OCI-LY7 (cell line): ENCODE measurements at regions of chr3 and their contacts with region 1.

Region 1: DNA sequence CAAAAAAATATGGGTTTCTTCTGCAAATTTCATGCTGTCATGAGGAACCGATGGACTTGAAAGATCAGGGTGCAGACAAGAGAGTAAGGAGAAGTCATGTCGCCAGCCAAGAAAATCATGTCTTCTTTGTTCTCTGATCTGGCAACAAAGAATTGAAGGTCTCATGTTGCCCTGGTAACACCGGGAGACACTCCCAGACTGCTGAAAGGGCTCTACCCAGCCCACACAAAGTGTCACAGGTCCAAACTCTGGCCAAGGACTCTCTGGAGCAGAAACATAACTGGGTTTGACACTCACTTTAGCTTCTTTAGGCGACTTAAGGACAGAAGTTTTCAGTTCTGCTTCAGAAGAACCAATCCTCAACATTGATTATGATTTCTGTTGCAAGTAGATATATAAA is 42.9 kb downstream of the SIDT1 start:
- DNase-seq: no peak
- H3K4me3 ChIP-seq: no peak overlapping the region
- H3K27ac ChIP-seq: no peak overlapping the region
- H3K4me1 ChIP-seq: no peaks in the 10 kb centered on the region
- CTCF ChIP-seq: no peak

Region 2: DNA sequence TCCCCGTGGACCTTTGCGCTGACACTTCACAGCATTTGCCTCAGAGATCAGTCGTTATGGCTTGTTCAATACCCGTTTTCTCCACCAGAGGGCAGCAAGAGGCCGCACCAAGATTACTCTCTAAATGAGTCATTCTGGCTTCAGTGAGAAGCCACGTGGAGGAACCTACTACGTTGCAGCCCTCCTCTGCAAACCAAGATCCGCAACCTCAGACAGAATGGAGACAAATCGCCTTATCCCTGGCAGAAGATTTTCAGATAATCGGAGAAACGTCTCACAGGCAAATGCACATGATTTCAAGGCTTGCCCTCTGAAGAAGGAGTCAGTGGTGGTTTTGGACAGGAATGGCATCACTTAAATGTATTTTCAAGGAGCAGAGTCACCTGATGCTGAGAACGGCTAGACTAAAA is 523.9 kb before region 1 on chr3:
- CTCF ChIA-PET with region 1: no interaction called
- POLR2A ChIA-PET with region 1: no interaction called
- intact Hi-C with region 1: loop called (anchors 2 kb)
- DNase-seq: peak; percentile 63
- H3K4me3 ChIP-seq: no peak overlapping the region
- H3K27ac ChIP-seq: no peak overlapping the region
- H3K4me1 ChIP-seq: no peaks in the 10 kb centered on the region
- CTCF ChIP-seq: peak; percentile 94

Region 3: DNA sequence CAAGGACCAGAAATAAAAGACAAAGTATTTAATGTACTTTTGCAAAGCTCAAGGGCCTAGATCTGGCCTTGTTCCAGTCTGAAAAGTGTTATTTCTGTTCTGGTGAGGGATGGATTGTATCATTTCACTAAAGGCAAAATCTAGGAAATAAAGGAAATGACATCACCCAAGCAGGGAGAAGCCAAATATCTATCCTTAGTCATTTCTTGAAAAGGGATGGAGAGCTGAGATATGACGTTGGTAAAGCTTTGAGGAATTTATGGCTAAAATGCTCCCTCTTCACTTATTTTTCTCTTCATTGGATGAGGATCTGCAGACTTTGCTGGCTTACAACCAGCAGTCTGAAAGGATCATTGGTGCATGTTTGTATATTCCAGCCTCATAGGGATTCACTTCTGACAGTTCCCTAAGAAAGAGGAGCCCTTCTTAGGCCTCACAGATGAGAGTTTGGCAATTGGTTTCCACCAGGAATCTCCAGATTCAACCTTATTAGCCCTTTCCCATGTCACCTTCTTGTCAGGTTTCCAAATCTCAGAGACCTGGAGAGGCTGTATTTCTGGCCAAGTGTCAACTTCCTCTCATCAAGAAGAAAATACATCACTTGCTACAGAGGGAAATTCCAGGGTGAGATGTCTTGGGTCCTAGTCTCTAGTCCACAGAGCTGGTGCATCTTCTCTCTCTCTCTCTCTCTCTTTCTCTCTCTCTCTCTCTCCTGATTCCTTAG is 457.5 kb before region 1 on chr3:
- CTCF ChIA-PET with region 1: no interaction called
- POLR2A ChIA-PET with region 1: no interaction called
- intact Hi-C with region 1: no loop called
- DNase-seq: no peak
- H3K4me3 ChIP-seq: no peak overlapping the region
- H3K27ac ChIP-seq: no peak overlapping the region
- H3K4me1 ChIP-seq: no peaks in the 10 kb centered on the region
- CTCF ChIP-seq: no peak

Region 4: GRCh38 chr3:113354307-113354706 is 220.9 kb before region 1 on chr3:
- CTCF ChIA-PET with region 1: no interaction called
- POLR2A ChIA-PET with region 1: no interaction called
- intact Hi-C with region 1: loop called (anchors 10 kb)
- DNase-seq: no peak
- H3K4me3 ChIP-seq: no peak overlapping the region
- H3K27ac ChIP-seq: no peak overlapping the region
- H3K4me1 ChIP-seq: no peaks in the 10 kb centered on the region
- CTCF ChIP-seq: no peak

Region 5: GRCh38 chr3:113626503-113627371 is 51.5 kb after region 1 on chr3:
- CTCF ChIA-PET with region 1: no interaction called
- POLR2A ChIA-PET with region 1: no interaction called
- intact Hi-C with region 1: loop called (anchors 2 kb)
- DNase-seq: peak; percentile 64
- H3K4me3 ChIP-seq: no peak overlapping the region
- H3K27ac ChIP-seq: no peak overlapping the region
- H3K4me1 ChIP-seq: peaks cover 27% of the 10 kb centered on the region
- CTCF ChIP-seq: peak; percentile 86

Region 6: GRCh38 chr3:114899186-114899931 is 1324.2 kb after region 1 on chr3:
- CTCF ChIA-PET with region 1: no interaction called
- POLR2A ChIA-PET with region 1: no interaction called
- intact Hi-C with region 1: no loop called
- DNase-seq: no peak
- H3K4me3 ChIP-seq: no peak overlapping the region
- H3K27ac ChIP-seq: no peak overlapping the region
- H3K4me1 ChIP-seq: no peaks in the 10 kb centered on the region
- CTCF ChIP-seq: no peak